ENCODE measurements at regions of chr2 and their contacts with region 1.

Region 1: DNA sequence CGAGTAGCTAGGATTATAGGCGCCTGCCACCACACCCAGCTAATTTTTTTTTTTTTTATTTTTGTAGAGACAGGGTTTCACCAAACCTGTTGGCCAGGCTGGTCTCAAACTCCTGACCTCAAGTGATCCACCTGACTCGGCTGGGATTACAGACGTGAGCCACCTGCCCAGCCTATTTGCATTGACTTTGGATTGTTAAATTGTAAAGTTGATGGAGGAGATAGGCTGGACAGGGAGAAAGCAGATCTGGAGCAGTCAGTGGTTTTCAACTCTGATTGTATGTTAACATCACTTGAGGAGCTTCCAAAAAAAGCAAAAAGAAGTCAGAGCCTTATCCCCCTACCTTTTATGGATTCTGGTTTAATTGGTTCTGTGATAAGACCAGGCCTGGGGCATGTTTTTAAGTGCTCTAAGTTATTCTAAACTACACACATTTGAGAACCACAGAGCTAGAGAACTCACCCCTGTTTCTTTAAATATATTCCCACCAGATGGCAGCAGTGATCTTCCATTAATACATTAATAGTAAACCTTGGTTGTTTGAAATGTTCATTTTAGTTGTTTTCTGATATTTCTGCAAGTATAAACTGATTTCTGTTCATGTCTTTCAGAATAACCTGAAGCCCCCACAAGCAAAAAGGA is 7.5 kb downstream of the C2orf49 start:
- DNase-seq: peak; percentile 18 to 45
- H3K4me3 ChIP-seq: no peak overlapping the region
- H3K27ac ChIP-seq: no peak overlapping the region
- H3K4me1 ChIP-seq: no peaks in the 10 kb centered on the region
- H3K27me3 ChIP-seq: no peaks in the 10 kb centered on the region
- CTCF ChIP-seq: peak; percentile 75

Region 2: GRCh38 chr2:104702451-104702850 is 642.4 kb before region 1 on chr2:
- CTCF ChIA-PET with region 1: no interaction called
- POLR2A ChIA-PET with region 1: no interaction called
- intact Hi-C with region 1: no loop called
- DNase-seq: no peak
- H3K4me3 ChIP-seq: no peak overlapping the region
- H3K27ac ChIP-seq: no peak overlapping the region
- H3K4me1 ChIP-seq: no peaks in the 10 kb centered on the region
- H3K27me3 ChIP-seq: peaks cover 66% of the 10 kb centered on the region
- CTCF ChIP-seq: no peak

Region 3: GRCh38 chr2:105243961-105244360 is 100.9 kb before region 1 on chr2:
- CTCF ChIA-PET with region 1: no interaction called
- POLR2A ChIA-PET with region 1: no interaction called
- intact Hi-C with region 1: no loop called
- DNase-seq: no peak
- H3K4me3 ChIP-seq: no peak overlapping the region
- H3K27ac ChIP-seq: no peak overlapping the region
- H3K4me1 ChIP-seq: no peaks in the 10 kb centered on the region
- H3K27me3 ChIP-seq: 0 out of 2 replicates have a peak, but pooled peaks cover 6% of the 10 kb centered on the region
- CTCF ChIP-seq: no peak

Region 4: DNA sequence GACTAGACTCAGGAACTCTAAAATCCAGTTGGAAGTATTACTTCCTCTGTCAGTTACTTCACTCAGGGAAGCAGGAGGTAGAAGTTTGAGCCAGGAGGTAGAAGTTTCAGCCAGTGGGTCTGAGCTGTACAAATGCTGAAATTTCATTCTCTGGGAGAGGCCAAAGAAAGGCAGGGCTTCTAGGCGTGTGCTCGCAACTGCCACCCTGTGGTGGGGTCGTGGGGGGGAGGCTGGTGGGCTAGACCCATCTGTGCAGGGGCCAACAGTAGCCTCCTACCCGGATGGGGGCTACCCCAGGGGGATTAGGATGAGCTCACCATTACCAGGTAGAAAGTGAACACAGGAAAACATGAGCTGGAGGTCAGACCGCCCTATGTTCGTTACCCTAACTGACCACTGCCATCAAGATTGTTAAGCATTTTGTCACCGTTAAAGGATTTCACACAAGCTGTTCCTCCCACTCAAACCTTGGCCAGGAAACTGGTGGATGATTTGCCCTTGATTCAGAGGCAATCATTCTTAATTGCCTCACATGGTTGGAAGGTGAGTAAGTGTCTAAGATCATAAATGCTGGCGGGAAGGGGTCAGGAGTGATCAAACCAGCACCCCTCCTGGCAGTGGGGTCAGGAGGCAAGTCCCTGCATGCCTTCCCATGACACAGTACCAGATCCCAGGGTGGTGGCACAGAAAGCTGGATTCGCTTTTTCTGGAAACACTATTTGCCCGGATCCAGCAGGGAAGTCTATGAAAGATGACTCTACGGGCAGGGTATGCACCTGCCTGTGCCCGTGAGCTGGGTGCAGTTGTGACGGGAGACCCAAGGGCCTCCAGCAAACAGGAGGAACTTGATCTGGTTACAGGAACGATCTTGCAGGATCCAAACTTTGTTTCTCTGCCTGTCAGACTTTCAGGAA is 59.2 kb after region 1 on chr2:
- CTCF ChIA-PET with region 1: no interaction called
- POLR2A ChIA-PET with region 1: interaction called, 7 read pairs
- intact Hi-C with region 1: loop called (anchors 5 kb)
- DNase-seq: peak; percentile 82 to 98
- H3K4me3 ChIP-seq: peak overlapping the region; percentile 41; the same call in 1 of the 2 replicates
- H3K27ac ChIP-seq: peak overlapping the region; percentile 96
- H3K4me1 ChIP-seq: peaks cover 77% of the 10 kb centered on the region
- H3K27me3 ChIP-seq: no peaks in the 10 kb centered on the region
- CTCF ChIP-seq: peak; percentile 64

Region 5: GRCh38 chr2:105545730-105546627 is 201.2 kb after region 1 on chr2:
- CTCF ChIA-PET with region 1: interaction called, 4 read pairs
- POLR2A ChIA-PET with region 1: no interaction called
- intact Hi-C with region 1: loop called (anchors 2 kb)
- DNase-seq: peak; percentile 46 to 63
- H3K4me3 ChIP-seq: no peak overlapping the region
- H3K27ac ChIP-seq: no peak overlapping the region
- H3K4me1 ChIP-seq: peaks cover 22% of the 10 kb centered on the region
- H3K27me3 ChIP-seq: no peaks in the 10 kb centered on the region
- CTCF ChIP-seq: peak; percentile 88

Region 6: DNA sequence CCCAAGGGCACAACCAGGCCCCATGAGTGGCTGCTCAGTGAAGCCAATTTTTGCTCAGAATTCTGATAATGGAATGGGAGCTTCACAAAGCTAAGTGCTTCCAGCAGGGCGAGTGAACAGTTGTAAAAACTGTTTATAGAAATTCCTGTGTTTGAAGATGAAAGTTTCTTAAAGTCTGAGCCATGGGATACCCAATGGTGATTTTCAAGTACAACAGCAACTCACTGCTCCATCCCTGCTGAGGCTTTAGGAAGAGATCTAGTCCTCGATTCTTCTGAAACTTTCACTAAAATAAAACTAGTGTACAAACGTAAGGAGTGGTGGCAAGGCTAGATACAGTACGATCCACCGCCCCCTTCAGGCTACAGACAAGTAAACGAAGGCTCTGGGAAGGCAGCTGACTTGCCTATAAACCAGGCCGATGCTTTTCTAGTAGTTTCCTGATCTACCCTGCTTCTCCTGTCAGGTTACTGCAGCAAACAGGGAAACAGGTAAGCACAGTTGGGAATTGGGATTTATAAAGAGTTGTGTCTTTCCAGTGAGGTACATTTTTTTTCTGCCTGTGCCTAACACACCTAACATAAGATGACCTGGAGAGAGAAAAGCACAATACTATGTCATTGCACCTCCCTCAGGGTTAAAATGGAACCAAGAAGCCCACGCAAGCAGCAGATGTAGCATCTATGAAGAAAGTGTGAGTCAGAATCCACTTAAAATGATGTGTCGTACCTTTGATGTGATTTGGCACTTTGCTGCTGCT is 740.5 kb after region 1 on chr2:
- CTCF ChIA-PET with region 1: interaction called, 13 read pairs
- POLR2A ChIA-PET with region 1: no interaction called
- intact Hi-C with region 1: no loop called
- DNase-seq: no peak
- H3K4me3 ChIP-seq: no peak overlapping the region
- H3K27ac ChIP-seq: no peak overlapping the region
- H3K4me1 ChIP-seq: no peaks in the 10 kb centered on the region
- H3K27me3 ChIP-seq: no peaks in the 10 kb centered on the region
- CTCF ChIP-seq: no peak

Region 7: GRCh38 chr2:106104332-106105062 is 759.7 kb after region 1 on chr2:
- CTCF ChIA-PET with region 1: no interaction called
- POLR2A ChIA-PET with region 1: no interaction called
- intact Hi-C with region 1: loop called (anchors 10 kb)
- DNase-seq: peak in 1 of 2 experiments; percentile 54
- H3K4me3 ChIP-seq: no peak overlapping the region
- H3K27ac ChIP-seq: no peak overlapping the region
- H3K4me1 ChIP-seq: no peaks in the 10 kb centered on the region
- H3K27me3 ChIP-seq: no peaks in the 10 kb centered on the region
- CTCF ChIP-seq: peak; percentile 99

Region 8: DNA sequence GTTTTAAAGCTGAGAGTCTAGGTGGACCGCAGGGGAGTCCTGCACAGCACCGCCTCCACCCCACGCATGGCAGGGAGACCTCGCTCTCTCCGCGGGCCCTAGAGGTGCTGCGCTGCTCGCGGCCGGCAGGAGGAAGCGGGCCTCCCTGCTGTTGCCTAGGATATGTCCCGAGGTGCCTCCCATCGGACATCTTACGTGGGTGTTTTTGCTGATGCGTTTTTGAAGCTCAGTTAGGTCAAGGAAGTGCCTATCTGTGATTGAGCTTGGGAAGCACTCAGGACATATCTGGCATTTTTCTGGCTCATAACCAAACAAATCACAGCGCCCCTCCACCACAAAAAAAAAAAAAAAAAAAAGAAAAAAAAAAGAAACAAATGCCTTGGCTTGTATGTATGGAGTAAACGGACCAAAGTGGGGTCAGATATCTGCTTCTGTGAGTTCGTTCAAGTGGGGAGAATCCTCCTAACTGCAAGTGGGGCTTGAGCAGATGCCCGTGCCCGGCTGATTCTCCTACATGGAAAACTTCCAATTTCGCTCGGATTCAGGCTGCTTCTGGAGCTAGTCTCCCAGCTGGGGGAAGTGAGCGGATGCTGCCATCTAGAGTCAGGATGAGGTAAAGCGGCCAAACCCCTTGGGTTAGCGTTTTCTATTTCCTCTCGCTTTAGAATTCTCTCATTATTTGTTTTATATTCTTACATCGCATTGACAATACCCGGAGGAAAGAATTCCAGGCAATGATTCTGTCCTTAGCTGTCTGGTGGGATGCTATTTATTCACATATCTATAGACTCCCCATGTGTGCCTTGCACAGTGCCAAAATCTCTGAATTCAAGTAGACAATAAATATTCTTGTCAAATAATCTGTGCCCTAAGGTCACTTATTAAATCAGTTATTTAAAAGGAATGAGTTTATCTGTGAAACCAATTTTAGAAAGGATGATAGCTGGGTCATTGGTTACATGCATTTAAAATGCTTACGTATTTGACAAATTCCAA is 1237.6 kb after region 1 on chr2:
- CTCF ChIA-PET with region 1: no interaction called
- POLR2A ChIA-PET with region 1: no interaction called
- intact Hi-C with region 1: loop called (anchors 10 kb)
- DNase-seq: peak; percentile 47 to 55
- H3K4me3 ChIP-seq: no peak overlapping the region
- H3K27ac ChIP-seq: no peak overlapping the region
- H3K4me1 ChIP-seq: no peaks in the 10 kb centered on the region
- H3K27me3 ChIP-seq: peaks cover 40% of the 10 kb centered on the region
- CTCF ChIP-seq: peak; percentile 82

Measured in PC-9 (cell line).